Tibial artery (tissue), 4 donors: ENCODE measurements at regions of chr12 and their contacts with region 1.

Region 1: GRCh38 chr12:5083955-5084849 is 40.5 kb downstream of the KCNA5 start:
- DNase-seq: no peak
- H3K4me3 ChIP-seq: no peak overlapping the region
- H3K27ac ChIP-seq: peak overlapping the region; percentile 45 to 79
- H3K4me1 ChIP-seq: peaks cover 0 to 56% (median 24%) of the 10 kb centered on the region in 4 donors
- H3K27me3 ChIP-seq: no peaks in the 10 kb centered on the region
- CTCF ChIP-seq: peak; percentile 65 to 82

Region 2: DNA sequence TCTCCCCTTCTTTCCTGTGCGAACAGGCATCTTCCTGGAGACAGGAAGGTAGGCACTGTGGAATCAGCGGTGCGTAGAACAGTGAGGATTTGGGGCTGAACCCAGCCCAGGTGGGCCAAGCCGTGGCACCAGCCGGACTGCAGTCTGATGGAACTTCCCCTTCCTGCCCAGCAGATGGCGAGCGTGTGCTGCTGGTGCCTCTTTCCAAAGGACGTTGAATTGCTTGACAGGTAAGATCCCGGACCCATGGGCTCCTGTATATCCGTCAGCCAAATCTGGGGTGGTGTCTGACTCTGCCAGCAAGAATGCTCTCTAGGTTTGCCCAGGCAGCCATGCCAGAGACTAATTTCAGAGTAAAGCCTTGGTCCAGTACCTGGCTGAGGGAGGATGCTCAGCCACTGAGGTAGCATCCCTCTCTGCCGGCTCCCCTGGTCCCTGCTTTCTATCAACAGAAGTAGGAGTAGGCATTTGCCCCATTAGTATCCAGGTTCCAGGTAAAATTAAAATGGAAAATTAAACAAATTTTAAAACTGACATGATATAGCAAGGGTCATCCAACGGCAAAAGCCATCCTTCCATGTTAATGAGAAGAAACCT is 61.6 kb before region 1 on chr12:
- intact Hi-C with region 1: loop called (anchors 2 kb)
- DNase-seq: peak in 1 of 2 donors; percentile 71
- H3K4me3 ChIP-seq: no peak overlapping the region
- H3K27ac ChIP-seq: no peak overlapping the region
- H3K4me1 ChIP-seq: peaks cover 0 to 6% (median 3%) of the 10 kb centered on the region in 4 donors
- H3K27me3 ChIP-seq: no peaks in the 10 kb centered on the region
- CTCF ChIP-seq: peak; percentile 91 to 95

Region 3: DNA sequence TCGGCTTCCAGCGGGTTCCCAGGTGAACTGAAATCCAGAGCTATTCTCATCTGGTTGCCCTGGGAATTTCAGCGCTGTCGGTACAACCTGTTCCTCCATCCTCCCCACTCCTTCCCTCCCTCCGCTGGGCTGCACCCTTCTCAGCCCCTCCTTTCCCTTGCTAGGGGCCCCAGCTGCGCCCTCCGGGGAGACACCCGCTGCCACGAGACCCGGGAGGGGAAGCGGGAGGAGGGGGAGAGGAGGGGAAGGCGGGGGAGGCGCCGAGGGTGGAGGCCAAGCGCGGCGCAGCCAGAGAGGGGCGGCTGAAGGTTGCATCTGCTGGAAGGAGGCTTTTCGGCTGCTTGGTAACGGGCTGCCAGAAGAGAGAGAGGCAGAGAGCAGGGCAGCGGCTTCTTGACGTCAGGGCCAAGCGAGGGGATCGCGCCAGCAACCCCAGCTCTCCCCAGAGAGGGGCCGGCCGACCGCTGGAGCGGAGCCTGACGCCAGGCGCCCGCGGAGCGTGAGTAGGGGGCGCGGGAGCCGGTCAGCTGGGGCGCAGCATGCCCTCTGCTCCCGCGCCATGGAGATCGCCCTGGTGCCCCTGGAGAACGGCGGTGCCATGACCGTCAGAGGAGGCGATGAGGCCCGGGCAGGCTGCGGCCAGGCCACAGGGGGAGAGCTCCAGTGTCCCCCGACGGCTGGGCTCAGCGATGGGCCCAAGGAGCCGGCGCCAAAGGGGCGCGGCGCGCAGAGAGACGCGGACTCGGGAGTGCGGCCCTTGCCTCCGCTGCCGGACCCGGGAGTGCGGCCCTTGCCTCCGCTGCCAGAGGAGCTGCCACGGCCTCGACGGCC is 40.4 kb before region 1 on chr12 and contains the start of gene KCNA5:
- intact Hi-C with region 1: loop called (anchors 5 kb)
- DNase-seq: peak; percentile 32 to 93
- H3K4me3 ChIP-seq: peak within 1 kb of the TSS; percentile 58 to 74
- H3K27ac ChIP-seq: peak within 1 kb of the TSS; percentile 93 to 97
- H3K4me1 ChIP-seq: peaks cover 0 to 39% (median 12%) of the 10 kb centered on the region in 4 donors
- H3K27me3 ChIP-seq: no peaks in the 10 kb centered on the region
- CTCF ChIP-seq: no peak

Region 4: GRCh38 chr12:5210179-5210922 is 126.1 kb after region 1 on chr12:
- intact Hi-C with region 1: no loop called
- DNase-seq: no peak
- H3K4me3 ChIP-seq: no peak overlapping the region
- H3K27ac ChIP-seq: no peak overlapping the region
- H3K4me1 ChIP-seq: no peaks in the 10 kb centered on the region
- H3K27me3 ChIP-seq: no peaks in the 10 kb centered on the region
- CTCF ChIP-seq: no peak